Activated T-helper 1 cell treated with anti-CD3 and anti-CD28 coated beads, Interleukin-12 subunit alpha, Interleukin-12 subunit beta, Interleukin-2, Interleukin-4 antibody, amounts not matched to agents 30 ng/mL and 10 ng/mL and 1 ng/mL, durations not matched to agents 14 hours and 24 hours and 36 hours (primary cell): ENCODE measurements at regions of chr17 and their contacts with region 1.

Region 1: GRCh38 chr17:17694169-17695081 is 13.2 kb downstream of the RAI1 start:
- DNase-seq: peak; percentile 72
- H3K4me3 Mint-ChIP-seq: peak overlapping the region; percentile 88
- H3K27ac Mint-ChIP-seq: peak overlapping the region; percentile 94
- H3K4me1 Mint-ChIP-seq: peaks cover 73% of the 10 kb centered on the region
- H3K27me3 Mint-ChIP-seq: no peaks in the 10 kb centered on the region

Region 2: GRCh38 chr17:17859909-17860765 is 165.7 kb after region 1 on chr17:
- intact Hi-C with region 1: no loop called
- DNase-seq: peak; percentile 59
- H3K4me3 Mint-ChIP-seq: no peak overlapping the region
- H3K27ac Mint-ChIP-seq: no peak overlapping the region
- H3K4me1 Mint-ChIP-seq: peaks cover 24% of the 10 kb centered on the region
- H3K27me3 Mint-ChIP-seq: no peaks in the 10 kb centered on the region

Region 3: GRCh38 chr17:17959520-17960361 is 265.3 kb after region 1 on chr17:
- intact Hi-C with region 1: no loop called
- DNase-seq: no peak
- H3K4me3 Mint-ChIP-seq: peak overlapping the region; percentile 85
- H3K27ac Mint-ChIP-seq: peak overlapping the region; percentile 100
- H3K4me1 Mint-ChIP-seq: peaks cover 55% of the 10 kb centered on the region
- H3K27me3 Mint-ChIP-seq: no peaks in the 10 kb centered on the region

Region 4: DNA sequence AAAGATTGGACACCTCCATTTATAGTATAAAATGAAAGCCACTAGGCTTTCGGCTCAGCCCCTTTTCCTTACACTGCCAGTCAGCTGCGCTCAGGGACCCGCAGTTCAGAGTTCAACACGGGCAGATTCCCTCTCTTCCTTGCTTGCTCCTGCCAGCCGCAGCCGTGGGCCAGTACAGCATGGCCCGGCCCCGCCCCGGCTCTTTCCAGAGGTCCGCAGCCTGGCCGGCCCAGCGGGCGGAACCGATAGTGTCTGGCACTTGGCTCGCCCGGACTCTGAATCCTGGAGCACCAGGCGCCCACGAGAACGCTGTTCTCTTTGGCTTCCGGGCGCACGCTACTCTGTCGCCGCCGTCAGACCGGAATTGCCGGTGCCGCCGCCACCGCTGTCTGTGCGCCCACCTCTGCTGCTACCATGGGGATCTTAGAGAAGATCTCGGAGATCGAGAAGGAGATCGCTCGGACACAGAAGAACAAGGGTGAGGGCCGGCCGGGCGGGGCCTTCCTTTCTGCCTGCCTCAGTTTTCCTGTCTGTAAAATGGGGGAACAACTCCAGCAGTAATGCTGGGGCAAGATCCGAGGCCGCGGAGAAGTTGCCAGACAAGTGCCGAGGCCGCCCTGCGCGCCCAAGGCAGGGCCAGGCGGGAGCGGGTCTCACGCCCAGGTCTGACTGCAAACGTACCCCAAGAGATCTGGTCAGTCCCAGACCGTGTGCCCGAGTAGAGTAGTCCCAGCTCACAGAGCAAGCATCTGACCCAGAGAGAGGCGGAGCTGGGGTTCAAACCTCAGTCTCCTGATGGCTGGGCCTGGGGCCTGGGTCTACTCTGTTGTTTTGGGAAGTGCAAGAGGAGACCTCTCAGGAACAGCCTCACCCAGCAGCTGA is 393.4 kb after region 1 on chr17 and contains the start of gene DRG2:
- intact Hi-C with region 1: loop called (anchors 5 kb)
- DNase-seq: peak; percentile 84
- H3K4me3 Mint-ChIP-seq: peak within 1 kb of the TSS; percentile 95
- H3K27ac Mint-ChIP-seq: peak within 1 kb of the TSS; percentile 96
- H3K4me1 Mint-ChIP-seq: peaks cover 17% of the 10 kb centered on the region
- H3K27me3 Mint-ChIP-seq: no peaks in the 10 kb centered on the region
- total RNA-seq, gene DRG2: 67.5 and 69.2 TPM in 2 replicates